Activated B cell treated with CpG ODN at 0.5 μM for 24 hours (primary cell): ENCODE measurements at regions of chr16 and their contacts with region 1.

Region 1: DNA sequence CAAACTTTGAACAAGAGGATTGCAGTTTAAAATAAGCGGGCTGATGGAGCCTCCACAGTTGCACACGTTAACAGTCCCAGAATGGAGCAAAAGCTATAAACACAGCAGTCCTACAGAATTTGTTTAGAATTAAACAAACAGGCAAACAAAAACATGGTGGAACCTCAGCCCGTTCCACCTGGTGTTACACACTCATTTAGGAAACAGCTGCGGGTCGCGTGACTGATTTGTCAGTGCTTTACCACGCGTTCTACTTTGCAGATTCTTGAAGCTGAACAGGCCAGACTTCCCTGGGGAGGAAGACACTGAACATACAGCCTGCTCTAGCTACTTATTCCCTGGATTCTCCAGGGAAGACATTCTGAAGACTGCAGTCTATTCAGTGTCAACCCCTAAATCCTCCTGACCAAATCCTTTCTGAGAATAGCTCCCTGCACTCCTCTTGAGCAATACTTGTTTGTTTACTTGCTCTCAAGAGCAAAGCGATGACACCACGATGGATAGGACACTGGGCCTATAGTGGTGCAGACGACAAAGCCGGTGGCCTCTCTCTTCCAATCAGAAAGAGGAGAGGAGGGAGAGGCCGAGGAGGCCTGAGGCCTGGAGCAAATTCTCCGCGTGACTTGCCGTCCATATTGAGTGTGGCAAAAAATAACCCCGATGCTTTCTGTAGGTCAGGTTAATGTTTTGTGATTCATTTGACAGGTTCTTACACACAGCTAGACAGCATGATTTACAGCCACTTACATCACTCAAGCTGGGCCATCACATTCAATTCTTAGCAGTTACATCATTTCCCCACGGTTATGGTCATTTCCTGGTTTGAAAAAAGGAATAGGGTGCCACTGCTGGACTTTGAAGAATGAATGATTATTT is 4.0 kb upstream of the MAP1LC3B start:
- DNase-seq: peak; percentile 59
- ATAC-seq: peak; percentile 62
- H3K4me3 Mint-ChIP-seq: peak overlapping the region; percentile 70
- H3K27ac Mint-ChIP-seq: peak overlapping the region; percentile 98
- H3K4me1 Mint-ChIP-seq: peaks cover 52% of the 10 kb centered on the region
- H3K27me3 Mint-ChIP-seq: peaks cover 2% of the 10 kb centered on the region
- CTCF ChIP-seq: no peak

Region 2: GRCh38 chr16:87203060-87203656 is 185.0 kb before region 1 on chr16:
- CTCF ChIA-PET with region 1: no interaction called
- POLR2A ChIA-PET with region 1: no interaction called
- intact Hi-C with region 1: no loop called
- DNase-seq: no peak
- ATAC-seq: no peak
- H3K4me3 Mint-ChIP-seq: no peak overlapping the region
- H3K27ac Mint-ChIP-seq: no peak overlapping the region
- H3K4me1 Mint-ChIP-seq: no peaks in the 10 kb centered on the region
- H3K27me3 Mint-ChIP-seq: peaks cover 13% of the 10 kb centered on the region
- CTCF ChIP-seq: no peak

Region 3: GRCh38 chr16:87316923-87317749 is 71.0 kb before region 1 on chr16 and contains the start of gene C16orf95:
- CTCF ChIA-PET with region 1: interaction called, 4 read pairs
- POLR2A ChIA-PET with region 1: interaction called, 41 read pairs
- intact Hi-C with region 1: loop called (anchors 1 kb)
- DNase-seq: peak; percentile 95
- ATAC-seq: peak; percentile 91
- H3K4me3 Mint-ChIP-seq: peak within 1 kb of the TSS; percentile 94
- H3K27ac Mint-ChIP-seq: peak within 1 kb of the TSS; percentile 96
- H3K4me1 Mint-ChIP-seq: peaks cover 13% of the 10 kb centered on the region
- H3K27me3 Mint-ChIP-seq: no peaks in the 10 kb centered on the region
- CTCF ChIP-seq: no peak
- total RNA-seq, gene C16orf95: 1.7 and 2.1 TPM in 2 replicates

Region 4: GRCh38 chr16:87492721-87493607 is 104.8 kb after region 1 on chr16 and contains the start of gene ZCCHC14:
- CTCF ChIA-PET with region 1: no interaction called
- POLR2A ChIA-PET with region 1: interaction called, 4 read pairs
- intact Hi-C with region 1: loop called (anchors 1 kb)
- DNase-seq: peak; percentile 89
- ATAC-seq: peak; percentile 91
- H3K4me3 Mint-ChIP-seq: peak within 1 kb of the TSS; percentile 82
- H3K27ac Mint-ChIP-seq: peak within 1 kb of the TSS; percentile 59
- H3K4me1 Mint-ChIP-seq: peaks cover 46% of the 10 kb centered on the region
- H3K27me3 Mint-ChIP-seq: peaks cover 22% of the 10 kb centered on the region
- CTCF ChIP-seq: no peak
- total RNA-seq, gene ZCCHC14: 3.4 and 3.8 TPM in 2 replicates